Gastrocnemius medialis (tissue), 4 donors: ENCODE measurements at regions of chr2 and their contacts with region 1.

Region 1: DNA sequence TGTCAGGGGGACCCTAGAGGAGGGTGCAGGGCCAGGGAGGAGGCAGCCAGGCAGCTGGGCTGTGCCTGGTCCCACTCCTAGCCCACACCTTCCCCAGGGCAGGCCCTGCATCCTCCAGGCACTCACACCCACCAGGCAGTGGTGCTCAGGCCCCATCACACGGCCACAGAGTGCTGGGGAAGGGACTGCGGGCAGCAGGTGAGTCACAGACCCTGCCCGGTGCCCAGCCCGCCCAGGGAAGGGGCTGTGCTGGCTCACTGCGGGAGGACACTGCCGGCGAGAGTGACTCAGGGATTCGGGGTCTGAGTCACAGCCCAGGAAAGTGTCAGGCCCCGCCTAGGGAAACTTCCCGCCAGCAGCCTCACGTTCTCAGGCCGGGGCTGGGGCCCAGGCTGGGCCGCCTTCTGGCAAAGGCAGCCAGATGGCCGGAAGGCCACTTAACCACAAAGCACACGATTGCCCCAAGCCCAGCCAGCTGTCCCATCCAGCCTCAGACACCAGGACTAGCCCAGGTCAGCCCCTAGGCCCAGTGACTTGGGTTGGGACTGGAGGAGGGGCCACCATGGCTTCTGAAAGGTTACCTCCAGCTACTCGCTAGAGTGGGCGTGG is 42.2 kb downstream of the BIN1 start:
- DNase-seq: peak; percentile 96 to 99
- ATAC-seq: peak; percentile 51 to 64
- H3K4me3 ChIP-seq: peak overlapping the region in 3 of 4 donors; percentile 25 to 33 (median 31)
- H3K27ac ChIP-seq: peak overlapping the region; percentile 97 to 100 (median 100)
- H3K4me1 ChIP-seq: peaks cover 63 to 88% of the 10 kb centered on the region in 2 donors
- H3K27me3 ChIP-seq: no peaks in the 10 kb centered on the region
- CTCF ChIP-seq: peak in 2 of 5 experiments; percentile 8 to 48
- POLR2A ChIP-seq: peak; percentile 71 to 74

Region 2: DNA sequence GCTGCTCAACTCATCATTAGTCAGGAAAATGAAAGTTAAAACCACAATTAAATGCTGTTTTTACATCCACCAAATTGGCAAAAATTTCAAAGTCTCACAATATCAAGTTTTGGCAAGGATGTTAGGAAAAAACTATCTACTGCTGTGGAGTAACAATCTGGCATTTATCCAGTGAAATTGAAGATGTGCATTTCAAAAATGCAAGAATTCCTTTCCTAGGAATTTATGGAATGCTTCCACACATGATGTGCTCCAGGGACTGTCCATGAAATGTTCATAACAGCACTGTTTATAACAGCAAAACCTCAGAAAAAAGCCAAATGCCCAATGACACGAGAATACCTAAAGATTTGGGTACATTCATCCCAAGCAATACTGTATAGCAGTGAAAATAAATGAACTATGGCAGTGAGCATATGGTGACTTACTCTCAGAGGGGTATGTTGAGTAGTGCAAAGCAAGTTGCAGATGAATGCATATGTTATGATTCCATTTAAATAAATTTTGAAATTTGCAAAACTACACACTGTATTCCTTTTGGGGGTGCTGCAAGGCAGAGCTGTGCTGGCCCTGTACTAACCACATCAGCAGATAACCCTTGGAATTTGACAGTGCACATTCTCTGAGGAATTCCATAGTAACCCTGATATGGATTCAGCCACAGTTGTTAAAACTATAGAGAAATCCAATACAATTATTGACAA is 450.1 kb before region 1 on chr2:
- in situ Hi-C with region 1: no loop called
- intact Hi-C with region 1: no loop called
- DNase-seq: no peak
- ATAC-seq: no peak
- H3K4me3 ChIP-seq: no peak overlapping the region
- H3K27ac ChIP-seq: no peak overlapping the region
- H3K4me1 ChIP-seq: peaks cover 3% of the 10 kb centered on the region in 2 donors
- H3K27me3 ChIP-seq: no peaks in the 10 kb centered on the region
- CTCF ChIP-seq: no peak
- POLR2A ChIP-seq: no peak

Region 3: GRCh38 chr2:127081826-127082633 is 17.3 kb after region 1 on chr2:
- in situ Hi-C with region 1: no loop called
- intact Hi-C with region 1: loop called (anchors 1 kb)
- DNase-seq: peak in 1 of 2 donors; percentile 84
- ATAC-seq: peak in 1 of 2 donors; percentile 2
- H3K4me3 ChIP-seq: peak overlapping the region; percentile 38 to 47 (median 45)
- H3K27ac ChIP-seq: peak overlapping the region; percentile 97 to 100 (median 100)
- H3K4me1 ChIP-seq: peaks cover 88 to 95% of the 10 kb centered on the region in 2 donors
- H3K27me3 ChIP-seq: no peaks in the 10 kb centered on the region
- CTCF ChIP-seq: no peak
- POLR2A ChIP-seq: peak in 1 of 2 donors; percentile 71

Region 4: DNA sequence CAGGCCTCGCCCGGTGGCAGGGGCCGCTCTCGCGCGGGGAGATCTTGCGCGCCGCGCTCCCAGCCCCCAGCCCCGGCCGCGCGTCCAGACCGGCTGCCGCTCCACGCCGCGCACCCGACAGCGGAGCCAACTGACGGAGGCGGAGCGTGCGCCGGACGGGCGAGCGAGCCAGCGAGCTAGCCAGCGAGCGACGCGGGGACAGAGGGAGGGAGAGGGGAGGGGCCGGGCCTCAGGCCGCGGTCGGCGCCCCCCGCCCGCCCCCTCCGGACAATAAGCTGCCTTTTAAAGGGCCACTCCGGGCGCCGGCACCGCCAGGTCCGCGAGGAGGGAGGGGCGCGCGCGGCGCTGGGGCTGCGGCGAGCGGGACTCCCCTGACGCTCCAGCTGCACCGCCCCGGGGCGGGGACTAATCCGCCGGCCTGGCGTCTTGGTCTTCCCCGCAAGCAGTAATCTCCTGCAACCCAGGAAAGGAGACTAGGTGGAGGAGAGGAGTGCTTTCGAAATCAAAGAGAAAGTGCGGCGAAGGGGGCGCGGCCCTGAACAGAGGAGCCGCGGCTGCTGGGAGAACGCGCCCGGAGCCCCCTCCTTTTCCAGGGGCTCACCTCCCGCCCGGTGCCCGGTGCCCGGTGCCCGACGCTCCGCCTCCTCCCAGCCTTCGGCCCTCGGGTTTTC is 42.3 kb after region 1 on chr2 and contains the start of gene BIN1:
- in situ Hi-C with region 1: no loop called
- intact Hi-C with region 1: loop called (anchors 2 kb)
- DNase-seq: peak; percentile 87 to 96
- ATAC-seq: peak; percentile 56 to 60
- H3K4me3 ChIP-seq: peak within 1 kb of the TSS; percentile 81 to 95 (median 90)
- H3K27ac ChIP-seq: peak within 1 kb of the TSS; percentile 97 to 100 (median 100)
- H3K4me1 ChIP-seq: peaks cover 26 to 44% of the 10 kb centered on the region in 2 donors
- H3K27me3 ChIP-seq: no peaks in the 10 kb centered on the region
- CTCF ChIP-seq: peak in 2 of 5 experiments; percentile 3 to 10
- POLR2A ChIP-seq: peak; percentile 99
- total RNA-seq, gene BIN1: 1,150 to 2,167 (median 1,736) TPM

Region 5: DNA sequence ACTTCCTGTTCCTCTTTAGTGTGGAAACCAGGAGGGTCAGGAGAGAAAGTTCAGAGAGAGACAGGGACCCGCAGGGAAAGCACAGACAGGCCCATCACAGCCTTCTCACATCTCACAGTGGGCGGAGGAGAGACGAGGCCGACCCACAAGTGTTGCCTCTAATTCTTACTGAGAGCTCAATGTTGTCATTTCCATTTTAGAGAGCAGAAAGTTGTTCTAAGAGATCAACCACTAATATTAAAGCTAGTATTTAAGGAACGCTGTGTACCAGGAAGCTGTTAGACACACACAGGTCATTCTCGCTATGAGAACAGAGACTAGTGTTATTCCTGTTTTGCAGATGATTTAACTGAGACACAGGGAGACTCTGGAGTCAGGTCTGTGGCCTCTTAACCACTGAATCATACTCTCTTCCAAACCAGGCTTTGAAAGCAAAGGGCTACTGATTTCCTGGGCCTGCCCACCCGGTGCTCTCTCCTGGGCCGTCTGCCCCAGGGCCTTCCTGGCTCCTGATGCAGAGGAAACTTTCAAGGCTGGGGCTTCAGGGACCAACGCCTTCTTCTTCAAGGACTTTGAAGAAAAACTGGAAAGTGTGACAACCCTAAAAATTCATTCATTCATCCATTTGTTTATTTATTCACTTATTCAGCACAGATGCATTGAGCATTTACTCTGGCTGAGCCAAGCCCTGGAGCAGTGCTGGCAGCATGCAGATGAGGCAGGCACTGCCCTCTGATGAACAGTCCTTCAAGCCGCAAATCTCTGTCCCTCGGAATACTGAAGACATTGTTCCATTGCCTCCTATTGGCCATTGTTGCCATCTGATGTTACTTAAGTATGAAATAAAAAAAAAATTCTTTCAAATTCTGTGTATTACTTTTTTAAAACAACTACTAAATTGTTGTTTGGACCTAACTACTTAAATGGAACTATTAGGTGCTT is 79.4 kb after region 1 on chr2:
- in situ Hi-C with region 1: no loop called
- intact Hi-C with region 1: loop called (anchors 1 kb)
- DNase-seq: peak in 1 of 2 donors; percentile 76
- ATAC-seq: peak; percentile 30 to 42
- H3K4me3 ChIP-seq: no peak overlapping the region
- H3K27ac ChIP-seq: peak overlapping the region; percentile 89 to 99 (median 96)
- H3K4me1 ChIP-seq: peaks cover 55 to 62% of the 10 kb centered on the region in 2 donors
- H3K27me3 ChIP-seq: no peaks in the 10 kb centered on the region
- CTCF ChIP-seq: peak in 2 of 5 experiments; percentile 19 to 28
- POLR2A ChIP-seq: peak; percentile 0 to 7

Region 6: GRCh38 chr2:127153691-127154158 is 89.0 kb after region 1 on chr2:
- in situ Hi-C with region 1: loop called in 1 of 4 experiments (anchors 10 kb)
- intact Hi-C with region 1: no loop called
- DNase-seq: peak; percentile 79 to 90
- ATAC-seq: peak; percentile 82 to 84
- H3K4me3 ChIP-seq: no peak overlapping the region
- H3K27ac ChIP-seq: peak overlapping the region; percentile 89 to 99 (median 93)
- H3K4me1 ChIP-seq: peaks cover 27 to 52% of the 10 kb centered on the region in 2 donors
- H3K27me3 ChIP-seq: no peaks in the 10 kb centered on the region
- CTCF ChIP-seq: no peak
- POLR2A ChIP-seq: peak; percentile 30 to 32

Region 7: DNA sequence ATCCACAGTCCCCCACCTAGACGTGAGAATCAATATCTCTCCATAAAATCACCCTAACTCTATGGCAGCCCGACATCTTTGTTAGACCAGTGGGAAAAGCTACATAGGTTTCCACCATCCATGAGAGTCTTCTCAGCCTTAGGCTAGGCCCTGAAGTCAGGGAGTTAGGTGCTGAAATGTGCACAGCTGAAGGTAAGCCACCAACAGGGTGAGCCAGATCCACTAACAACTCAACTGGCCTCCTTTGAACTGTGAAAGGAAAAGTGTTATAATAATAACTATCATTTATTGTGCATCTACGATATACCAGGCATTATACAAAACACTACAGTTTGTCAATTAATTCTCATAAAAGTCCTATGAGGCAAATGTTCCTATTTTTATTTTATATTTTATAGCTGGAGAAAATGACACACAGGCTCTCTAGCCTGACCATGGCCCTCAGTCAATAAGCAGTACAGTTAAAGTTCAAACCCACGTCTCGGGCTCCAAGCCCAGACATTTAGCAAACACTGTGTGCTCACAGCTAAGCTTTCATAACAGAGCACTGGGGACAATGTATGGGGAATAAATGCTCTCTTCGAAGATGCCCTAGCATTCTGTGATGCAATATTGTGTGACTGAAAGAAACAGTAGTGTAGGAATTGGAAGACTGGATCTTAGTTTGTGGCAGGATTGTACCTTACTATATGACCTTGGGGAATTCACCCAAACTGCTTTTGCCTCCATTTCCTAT is 166.6 kb after region 1 on chr2:
- in situ Hi-C with region 1: no loop called
- intact Hi-C with region 1: no loop called
- DNase-seq: no peak
- ATAC-seq: no peak
- H3K4me3 ChIP-seq: no peak overlapping the region
- H3K27ac ChIP-seq: no peak overlapping the region
- H3K4me1 ChIP-seq: no peaks in the 10 kb centered on the region
- H3K27me3 ChIP-seq: peaks cover 0 to 14% (median 12%) of the 10 kb centered on the region in 3 donors
- CTCF ChIP-seq: no peak
- POLR2A ChIP-seq: no peak

Region 8: GRCh38 chr2:127387655-127388422 is 323.1 kb after region 1 on chr2 and contains the start of gene MAP3K2:
- in situ Hi-C with region 1: no loop called
- intact Hi-C with region 1: loop called (anchors 10 kb)
- DNase-seq: peak; percentile 94 to 98
- ATAC-seq: peak; percentile 82 to 84
- H3K4me3 ChIP-seq: peak within 1 kb of the TSS; percentile 77 to 97 (median 94)
- H3K27ac ChIP-seq: peak within 1 kb of the TSS; percentile 99 to 100 (median 100)
- H3K4me1 ChIP-seq: peaks cover 35 to 40% of the 10 kb centered on the region in 2 donors
- H3K27me3 ChIP-seq: no peaks in the 10 kb centered on the region
- CTCF ChIP-seq: peak in 1 of 5 experiments; percentile 11
- POLR2A ChIP-seq: peak; percentile 97 to 99
- total RNA-seq, gene MAP3K2: 33.8 to 46.4 (median 39.4) TPM

Region 9: GRCh38 chr2:127408004-127408806 is 343.5 kb after region 1 on chr2:
- in situ Hi-C with region 1: no loop called
- intact Hi-C with region 1: loop called (anchors 5 kb)
- DNase-seq: peak; percentile 80 to 90
- ATAC-seq: peak; percentile 63 to 70
- H3K4me3 ChIP-seq: peak overlapping the region; percentile 47 to 59 (median 54)
- H3K27ac ChIP-seq: peak overlapping the region; percentile 86 to 95 (median 89)
- H3K4me1 ChIP-seq: peaks cover 16 to 25% of the 10 kb centered on the region in 2 donors
- H3K27me3 ChIP-seq: no peaks in the 10 kb centered on the region
- CTCF ChIP-seq: peak in 1 of 5 experiments; percentile 6
- POLR2A ChIP-seq: peak; percentile 85 to 92